ENCODE measurements at regions of chr7 and their contacts with region 1.

Region 1: GRCh38 chr7:133983685-133984419 is 143.3 kb upstream of the LRGUK start:
- DNase-seq: no peak
- ATAC-seq: no peak
- H3K4me3 ChIP-seq: no peak overlapping the region
- H3K4me3 Mint-ChIP-seq: no peak overlapping the region
- H3K27ac ChIP-seq: no peak overlapping the region
- H3K27ac Mint-ChIP-seq: no peak overlapping the region
- H3K4me1 ChIP-seq: no peaks in the 10 kb centered on the region
- H3K4me1 Mint-ChIP-seq: no peaks in the 10 kb centered on the region
- H3K27me3 ChIP-seq: no peaks in the 10 kb centered on the region
- H3K27me3 Mint-ChIP-seq: no peaks in the 10 kb centered on the region
- CTCF ChIP-seq: no peak

Region 2: DNA sequence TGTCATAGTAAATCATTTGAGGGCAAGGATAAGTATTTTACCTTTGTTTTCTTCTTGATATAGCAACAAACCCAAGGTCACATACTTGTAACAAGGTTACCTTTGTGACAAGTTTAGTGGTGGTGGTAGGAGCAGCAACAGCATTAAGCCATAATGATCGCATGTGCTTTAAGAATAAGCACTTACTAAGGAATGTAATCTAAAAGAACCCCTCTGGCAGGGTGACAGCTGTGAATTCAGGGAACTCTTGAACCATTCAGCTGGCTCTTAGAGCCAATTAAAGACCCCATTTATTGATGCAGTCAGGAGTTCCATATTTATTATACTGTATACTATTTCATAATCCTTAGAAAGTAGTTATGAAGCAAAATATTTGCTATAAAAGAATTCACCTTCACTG is 360.1 kb before region 1 on chr7:
- CTCF ChIA-PET with region 1: no interaction called
- POLR2A ChIA-PET with region 1: no interaction called
- intact Hi-C with region 1: no loop called
- DNase-seq: no peak
- ATAC-seq: no peak
- H3K4me3 ChIP-seq: no peak overlapping the region
- H3K4me3 Mint-ChIP-seq: no peak overlapping the region
- H3K27ac ChIP-seq: no peak overlapping the region
- H3K27ac Mint-ChIP-seq: no peak overlapping the region
- H3K4me1 ChIP-seq: no peaks in the 10 kb centered on the region
- H3K4me1 Mint-ChIP-seq: no peaks in the 10 kb centered on the region
- H3K27me3 ChIP-seq: no peaks in the 10 kb centered on the region
- H3K27me3 Mint-ChIP-seq: no peaks in the 10 kb centered on the region
- CTCF ChIP-seq: no peak

Region 3: GRCh38 chr7:133941496-133941895 is 42.4 kb before region 1 on chr7:
- CTCF ChIA-PET with region 1: no interaction called
- POLR2A ChIA-PET with region 1: no interaction called
- intact Hi-C with region 1: loop called in 1 of 2 experiments (anchors 1 kb)
- DNase-seq: no peak
- ATAC-seq: no peak
- H3K4me3 ChIP-seq: no peak overlapping the region
- H3K4me3 Mint-ChIP-seq: no peak overlapping the region
- H3K27ac ChIP-seq: no peak overlapping the region
- H3K27ac Mint-ChIP-seq: no peak overlapping the region
- H3K4me1 ChIP-seq: no peaks in the 10 kb centered on the region
- H3K4me1 Mint-ChIP-seq: no peaks in the 10 kb centered on the region
- H3K27me3 ChIP-seq: no peaks in the 10 kb centered on the region
- H3K27me3 Mint-ChIP-seq: no peaks in the 10 kb centered on the region
- CTCF ChIP-seq: no peak